Transverse colon (tissue), 4 donors: ENCODE measurements at regions of chr9 and their contacts with region 1.

Region 1: GRCh38 chr9:132268725-132269352 is 85.9 kb downstream of the SETX start:
- DNase-seq: peak; percentile 65
- H3K4me3 ChIP-seq: no peak overlapping the region
- H3K27ac ChIP-seq: no peak overlapping the region
- H3K4me1 ChIP-seq: no peaks in the 10 kb centered on the region
- H3K27me3 ChIP-seq: no peaks in the 10 kb centered on the region
- CTCF ChIP-seq: peak; percentile 74 to 91 (median 85)
- EP300 ChIP-seq: no peak
- POLR2A ChIP-seq: no peak

Region 2: GRCh38 chr9:131562032-131562959 is 706.5 kb before region 1 on chr9:
- in situ Hi-C with region 1: loop called in 1 of 4 experiments (anchors 25 kb)
- intact Hi-C with region 1: no loop called
- DNase-seq: no peak
- H3K4me3 ChIP-seq: no peak overlapping the region
- H3K27ac ChIP-seq: no peak overlapping the region
- H3K4me1 ChIP-seq: no peaks in the 10 kb centered on the region
- H3K27me3 ChIP-seq: no peaks in the 10 kb centered on the region
- CTCF ChIP-seq: no peak
- EP300 ChIP-seq: no peak
- POLR2A ChIP-seq: no peak

Region 3: DNA sequence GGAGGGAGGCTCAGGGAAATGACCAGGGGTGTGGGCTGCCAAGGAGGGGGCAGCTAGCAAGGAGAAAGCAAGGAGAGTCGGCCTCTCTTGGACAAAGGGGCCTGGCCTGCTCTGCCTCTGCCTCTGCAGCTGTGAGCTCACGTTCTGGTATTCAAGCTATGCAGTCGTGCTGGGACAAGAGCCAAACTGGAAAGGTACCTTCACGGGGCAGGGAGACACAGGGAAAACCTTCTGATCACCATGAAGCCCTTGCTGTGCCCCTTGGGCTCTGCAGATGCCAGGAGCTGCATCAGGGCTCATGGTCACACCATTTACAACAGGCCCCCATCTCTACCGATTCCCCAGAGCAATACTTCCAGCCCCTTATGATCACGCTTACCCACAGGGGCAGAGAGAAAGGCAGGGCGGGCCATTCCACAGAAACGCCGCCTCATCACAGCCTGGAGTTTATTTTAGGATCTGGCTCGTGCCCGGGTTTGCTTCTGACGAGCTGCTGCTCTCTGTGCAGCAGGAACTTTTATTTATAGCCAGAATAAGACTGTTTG is 660.3 kb before region 1 on chr9:
- in situ Hi-C with region 1: loop called in 1 of 4 experiments (anchors 25 kb)
- intact Hi-C with region 1: no loop called
- DNase-seq: peak; percentile 44
- H3K4me3 ChIP-seq: no peak overlapping the region
- H3K27ac ChIP-seq: peak overlapping the region; percentile 63 to 84 (median 81)
- H3K4me1 ChIP-seq: peaks cover 15 to 27% (median 21%) of the 10 kb centered on the region in 4 donors
- H3K27me3 ChIP-seq: no peaks in the 10 kb centered on the region
- CTCF ChIP-seq: no peak
- EP300 ChIP-seq: no peak
- POLR2A ChIP-seq: no peak

Region 4: DNA sequence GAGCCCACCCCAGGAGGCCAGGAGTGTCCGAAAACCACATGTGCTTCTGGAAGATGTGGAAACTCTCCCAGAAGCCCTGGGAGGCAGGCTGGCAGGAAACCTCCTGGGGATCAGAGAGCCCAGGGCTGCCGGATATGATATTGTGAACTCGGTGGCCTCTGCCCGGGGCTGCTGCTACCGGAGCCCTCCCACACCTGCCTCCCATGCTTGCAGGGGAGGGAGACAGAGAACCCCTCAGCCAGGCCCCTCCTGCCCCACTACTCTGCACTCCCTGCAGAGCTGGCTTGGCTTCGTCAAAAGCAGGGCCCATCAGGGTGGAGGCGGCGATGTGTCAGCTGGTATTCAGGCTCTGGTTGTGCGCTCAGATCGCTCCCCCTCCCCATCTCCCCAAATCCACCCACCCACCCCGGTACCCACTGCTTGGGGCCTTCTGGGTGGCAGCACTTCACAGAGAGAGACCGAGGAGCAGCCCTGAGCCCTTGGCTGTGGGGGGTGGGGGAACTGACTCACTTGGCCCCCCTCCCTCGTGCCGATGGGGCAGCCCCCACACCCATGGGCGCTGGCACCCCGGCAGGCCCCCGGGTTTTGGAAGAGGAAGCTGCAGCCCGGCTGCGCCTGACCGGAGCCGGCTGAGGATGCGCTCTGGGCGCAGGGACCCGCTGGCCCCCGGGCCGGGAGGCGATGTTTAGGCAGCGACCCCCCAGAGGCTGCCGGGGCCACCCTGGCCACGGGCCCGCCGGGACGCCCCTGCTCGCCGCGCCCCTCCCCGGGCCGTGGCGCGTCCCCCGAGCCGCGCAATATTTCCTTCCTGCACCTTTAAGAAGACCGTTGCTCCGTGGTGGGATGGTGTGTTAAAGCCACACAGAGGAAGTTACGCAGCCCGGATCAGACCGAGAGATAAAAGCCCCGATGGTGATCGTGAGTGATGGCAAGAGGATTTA is 107.8 kb before region 1 on chr9:
- in situ Hi-C with region 1: no loop called
- intact Hi-C with region 1: no loop called
- DNase-seq: peak; percentile 32
- H3K4me3 ChIP-seq: peak overlapping the region in 3 of 4 donors; percentile 51 to 80 (median 55)
- H3K27ac ChIP-seq: no peak overlapping the region
- H3K4me1 ChIP-seq: peaks cover 7 to 25% (median 19%) of the 10 kb centered on the region in 4 donors
- H3K27me3 ChIP-seq: peaks cover 91% of the 10 kb centered on the region
- CTCF ChIP-seq: no peak
- EP300 ChIP-seq: no peak
- POLR2A ChIP-seq: no peak